Tibial artery (tissue), 4 donors: ENCODE measurements at regions of chr12 and their contacts with region 1.

Region 1: GRCh38 chr12:122366685-122367475 is 55.6 kb downstream of the CLIP1 start:
- DNase-seq: peak in 1 of 2 donors; percentile 74
- H3K4me3 ChIP-seq: no peak overlapping the region
- H3K27ac ChIP-seq: peak overlapping the region; percentile 70 to 81
- H3K4me1 ChIP-seq: peaks cover 0 to 67% (median 25%) of the 10 kb centered on the region in 4 donors
- H3K27me3 ChIP-seq: no peaks in the 10 kb centered on the region
- CTCF ChIP-seq: no peak

Region 2: DNA sequence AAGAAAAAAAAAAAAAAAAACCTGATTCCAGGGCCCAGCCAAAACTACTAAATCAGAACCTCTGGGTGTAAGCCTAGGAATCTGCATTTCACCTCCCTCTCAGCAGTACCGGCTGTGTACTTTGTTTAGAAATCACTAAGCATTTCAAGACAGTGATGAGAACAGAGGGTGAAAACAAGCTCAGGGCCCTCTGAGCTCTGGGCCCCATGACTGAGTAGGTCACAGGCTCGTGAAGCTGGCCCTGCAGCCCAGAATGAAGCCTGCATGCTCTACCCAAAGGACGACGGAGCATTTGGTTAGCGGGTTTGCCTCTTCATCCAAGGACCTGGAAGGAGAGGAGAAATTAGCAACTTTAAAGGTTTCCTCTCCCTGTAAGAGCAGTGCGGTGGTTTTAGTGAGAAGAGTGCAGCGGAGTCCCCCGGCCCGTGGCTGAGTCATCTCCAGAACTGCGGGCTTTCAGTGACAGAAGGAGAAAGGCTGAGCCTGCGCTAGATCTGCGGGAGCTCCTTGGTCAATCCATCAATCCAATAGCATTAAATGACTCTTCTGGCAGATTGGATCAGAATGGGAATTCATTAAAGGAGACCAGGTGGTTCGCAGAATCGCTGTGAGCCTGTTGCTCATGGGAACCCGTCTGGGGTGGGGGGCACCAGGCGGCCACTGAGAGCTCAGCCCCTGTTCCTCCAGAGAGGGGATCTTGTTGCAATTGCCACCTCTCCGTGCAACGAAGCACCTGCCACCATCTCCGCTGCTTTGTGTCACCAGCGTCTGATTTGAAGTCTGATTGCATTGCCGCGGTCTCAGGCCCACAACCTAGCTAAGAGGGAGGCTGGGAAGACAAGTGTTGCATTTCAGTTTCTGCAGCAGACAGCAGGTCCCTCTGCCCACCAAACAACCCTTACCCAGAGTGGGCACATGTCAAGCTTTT is 200.2 kb before region 1 on chr12:
- intact Hi-C with region 1: no loop called
- DNase-seq: no peak
- H3K4me3 ChIP-seq: no peak overlapping the region
- H3K27ac ChIP-seq: no peak overlapping the region
- H3K4me1 ChIP-seq: no peaks in the 10 kb centered on the region
- H3K27me3 ChIP-seq: peaks cover 0 to 24% of the 10 kb centered on the region in 2 donors
- CTCF ChIP-seq: no peak

Region 3: DNA sequence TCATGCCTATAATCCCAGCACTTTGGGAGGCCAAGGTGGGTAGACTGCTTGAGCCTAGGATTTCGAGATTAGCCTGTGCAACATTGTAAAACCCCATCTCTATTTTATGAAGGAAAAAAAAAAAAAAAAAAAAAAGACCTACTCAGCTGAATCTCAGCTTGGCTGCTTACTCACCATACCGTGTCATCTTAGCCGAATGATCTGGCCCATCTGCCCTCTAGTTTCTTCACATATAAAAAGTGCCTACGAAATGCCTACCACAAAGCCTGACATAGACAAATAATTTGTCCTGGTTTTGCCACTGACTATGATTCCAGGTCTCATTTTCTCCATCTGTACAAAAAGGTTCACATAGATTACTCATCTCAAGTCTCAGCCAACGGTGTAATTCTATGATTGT is 151.1 kb before region 1 on chr12:
- intact Hi-C with region 1: no loop called
- DNase-seq: no peak
- H3K4me3 ChIP-seq: no peak overlapping the region
- H3K27ac ChIP-seq: no peak overlapping the region
- H3K4me1 ChIP-seq: no peaks in the 10 kb centered on the region
- H3K27me3 ChIP-seq: no peaks in the 10 kb centered on the region
- CTCF ChIP-seq: no peak

Region 4: DNA sequence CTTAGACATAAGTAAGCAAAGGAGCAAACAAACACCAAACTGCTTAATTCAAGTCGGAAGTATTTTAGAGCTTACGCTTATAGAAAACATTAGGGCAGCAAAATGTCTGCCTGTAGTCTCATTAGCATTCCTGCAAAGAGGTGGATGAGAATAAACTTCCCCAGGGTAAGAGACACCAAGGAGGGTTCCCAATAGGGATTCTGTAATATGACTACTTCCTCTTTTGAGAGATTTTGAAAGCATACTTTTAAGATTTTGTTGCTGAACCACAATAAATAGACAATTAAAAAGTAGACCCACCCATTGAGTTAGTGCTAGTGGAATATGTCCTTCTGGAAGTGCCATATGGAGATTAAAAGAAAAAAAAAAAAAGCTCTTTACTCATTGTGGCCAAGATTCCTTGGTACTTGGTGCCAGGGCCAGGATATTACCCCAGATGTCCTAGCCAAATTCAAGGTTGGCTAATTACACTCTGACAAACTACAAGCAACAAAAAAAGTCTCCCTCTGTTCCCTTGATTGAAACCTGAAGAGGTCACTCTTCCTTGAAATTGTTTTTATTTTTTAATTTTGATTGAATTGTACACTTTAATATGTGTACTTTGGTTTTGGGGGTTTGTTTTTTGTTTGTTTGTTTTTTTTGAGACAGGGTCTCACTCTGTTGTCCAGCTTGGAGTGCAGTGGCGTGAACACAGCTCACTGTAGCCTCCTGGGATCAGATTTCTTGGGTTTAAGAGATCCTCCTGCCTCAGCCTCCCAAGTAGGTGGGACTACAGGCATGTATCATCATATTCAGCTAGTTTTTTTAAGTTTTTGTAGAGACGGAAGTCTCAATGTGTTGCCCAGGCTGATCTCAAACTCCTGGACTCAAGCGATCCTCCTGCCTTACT is 46.9 kb after region 1 on chr12:
- intact Hi-C with region 1: loop called (anchors 10 kb)
- DNase-seq: no peak
- H3K4me3 ChIP-seq: no peak overlapping the region
- H3K27ac ChIP-seq: peak overlapping the region; percentile 57 to 61
- H3K4me1 ChIP-seq: peaks cover 0 to 85% (median 35%) of the 10 kb centered on the region in 4 donors
- H3K27me3 ChIP-seq: no peaks in the 10 kb centered on the region
- CTCF ChIP-seq: no peak